Right cardiac atrium (tissue), 5 donors: ENCODE measurements at regions of chr2 and their contacts with region 1.

Region 1: DNA sequence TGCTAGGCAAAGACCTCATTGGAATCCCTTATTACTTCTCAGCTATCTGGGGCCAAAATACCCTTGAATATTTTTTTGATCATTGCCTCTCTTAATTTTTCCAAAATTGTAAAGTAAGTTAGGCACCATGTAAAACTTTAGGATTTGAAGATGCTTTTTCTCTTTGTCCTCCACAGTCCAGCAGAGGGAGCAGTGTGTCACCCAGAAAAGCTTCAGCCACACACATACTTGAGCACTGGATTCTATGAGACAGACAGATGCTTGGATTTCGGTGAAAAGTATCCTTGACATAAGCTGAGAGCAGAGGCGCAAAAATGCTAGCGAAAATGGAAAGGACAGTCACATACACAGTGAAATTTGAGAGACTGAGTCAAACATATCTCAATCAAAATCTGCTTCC is 74.7 kb upstream of the KCNJ3 start:
- DNase-seq: peak in 1 of 3 donors; percentile 52
- ATAC-seq: peak; percentile 59 to 80
- H3K4me3 ChIP-seq: no peak overlapping the region
- H3K27ac ChIP-seq: no peak overlapping the region
- H3K4me1 ChIP-seq: no peaks in the 10 kb centered on the region
- H3K27me3 ChIP-seq: no peaks in the 10 kb centered on the region

Region 2: DNA sequence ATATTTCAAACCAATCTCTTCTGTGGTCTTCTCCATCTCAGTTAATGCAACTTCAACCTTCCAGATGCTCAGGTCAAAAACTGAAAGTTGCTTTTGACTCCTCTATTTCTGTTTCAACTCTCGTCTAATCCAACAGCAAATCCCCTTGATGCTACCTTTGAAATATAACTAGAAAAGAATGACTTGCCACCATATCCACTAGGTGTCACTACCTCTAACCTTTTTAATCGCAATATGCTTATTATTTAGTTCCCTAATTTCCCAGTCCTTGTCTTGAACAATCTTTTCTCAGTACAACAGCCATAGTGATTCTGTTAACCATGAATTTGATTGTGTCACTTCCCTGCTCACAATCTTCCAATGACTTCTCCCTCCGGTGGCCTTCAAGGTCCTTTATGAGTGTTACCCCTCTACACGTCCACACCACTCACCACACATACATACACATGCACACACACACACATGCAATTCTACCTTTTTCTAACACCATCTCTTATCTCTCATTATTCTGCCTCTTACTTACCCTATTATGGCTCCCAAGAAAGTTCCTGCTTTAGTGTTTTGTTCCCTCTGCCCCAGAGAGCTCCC is 170.8 kb before region 1 on chr2:
- intact Hi-C with region 1: loop called in 2 of 4 experiments (anchors 5 to 10 kb)
- DNase-seq: no peak
- ATAC-seq: peak in 1 of 2 donors; percentile 11
- H3K4me3 ChIP-seq: no peak overlapping the region
- H3K27ac ChIP-seq: no peak overlapping the region
- H3K4me1 ChIP-seq: peaks cover 2% of the 10 kb centered on the region
- H3K27me3 ChIP-seq: no peaks in the 10 kb centered on the region

Region 3: GRCh38 chr2:154587739-154588138 is 36.1 kb before region 1 on chr2:
- intact Hi-C with region 1: no loop called
- DNase-seq: no peak
- ATAC-seq: no peak
- H3K4me3 ChIP-seq: no peak overlapping the region
- H3K27ac ChIP-seq: no peak overlapping the region
- H3K4me1 ChIP-seq: no peaks in the 10 kb centered on the region
- H3K27me3 ChIP-seq: no peaks in the 10 kb centered on the region

Region 4: GRCh38 chr2:154709215-154709614 is 85.4 kb after region 1 on chr2:
- intact Hi-C with region 1: loop called in 1 of 4 experiments (anchors 5 kb)
- DNase-seq: no peak
- ATAC-seq: peak in 1 of 2 donors; percentile 45
- H3K4me3 ChIP-seq: peak overlapping the region; percentile 9
- H3K27ac ChIP-seq: no peak overlapping the region
- H3K4me1 ChIP-seq: no peaks in the 10 kb centered on the region
- H3K27me3 ChIP-seq: no peaks in the 10 kb centered on the region